Endothelial cell of umbilical vein (primary cell): ENCODE measurements at regions of chr10 and their contacts with region 1.

Region 1: DNA sequence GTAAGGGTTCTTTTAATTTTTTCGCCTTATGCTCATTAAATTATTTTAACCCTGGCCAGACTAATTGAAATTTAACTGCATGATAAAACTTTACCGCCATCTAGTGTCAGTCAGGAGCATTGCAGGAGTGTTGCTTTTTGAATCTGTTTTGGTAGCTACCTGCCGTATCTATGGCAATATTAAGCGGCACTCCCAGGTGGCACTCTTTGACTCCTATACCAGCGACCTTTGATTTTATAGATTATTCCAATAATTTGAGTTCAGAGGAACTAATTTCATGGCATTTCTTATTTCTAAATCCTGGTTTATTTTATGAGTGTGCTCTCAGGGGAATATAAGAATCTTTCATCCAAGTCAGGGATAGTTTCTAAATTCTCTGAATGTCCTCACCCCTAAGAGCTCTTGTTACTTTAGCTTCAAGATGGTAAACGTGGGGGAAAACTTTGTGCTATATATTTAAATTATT is 198.9 kb downstream of the REEP3 start:
- DNase-seq: peak; percentile 62
- H3K4me3 ChIP-seq: no peak overlapping the region
- H3K27ac ChIP-seq: no peak overlapping the region
- H3K4me1 ChIP-seq: peaks cover 20% of the 10 kb centered on the region
- H3K27me3 ChIP-seq: no peaks in the 10 kb centered on the region
- CTCF ChIP-seq: peak; percentile 76 to 81
- POLR2A ChIP-seq: no peak

Region 2: GRCh38 chr10:63206997-63207811 is 512.9 kb before region 1 on chr10:
- CTCF ChIA-PET with region 1: interaction called, 11 read pairs
- POLR2A ChIA-PET with region 1: no interaction called
- dilution Hi-C with region 1: loop called (anchors 25 kb)
- intact Hi-C with region 1: no loop called
- DNase-seq: peak; percentile 96
- H3K4me3 ChIP-seq: no peak overlapping the region
- H3K27ac ChIP-seq: peak overlapping the region; percentile 87
- H3K4me1 ChIP-seq: peaks cover 54% of the 10 kb centered on the region
- H3K27me3 ChIP-seq: no peaks in the 10 kb centered on the region
- CTCF ChIP-seq: no peak
- POLR2A ChIP-seq: no peak

Region 3: GRCh38 chr10:63268798-63269503 is 451.2 kb before region 1 on chr10:
- CTCF ChIA-PET with region 1: interaction called, 31 read pairs
- POLR2A ChIA-PET with region 1: interaction called, 4 read pairs
- dilution Hi-C with region 1: no loop called
- intact Hi-C with region 1: no loop called
- DNase-seq: peak; percentile 98
- H3K4me3 ChIP-seq: peak overlapping the region; percentile 75 to 99 (median 85)
- H3K27ac ChIP-seq: peak overlapping the region; percentile 92
- H3K4me1 ChIP-seq: peaks cover 31% of the 10 kb centered on the region
- H3K27me3 ChIP-seq: no peaks in the 10 kb centered on the region
- CTCF ChIP-seq: peak in 1 of 2 donors; percentile 23
- POLR2A ChIP-seq: peak; percentile 99

Region 4: GRCh38 chr10:63629363-63630084 is 90.6 kb before region 1 on chr10:
- CTCF ChIA-PET with region 1: interaction called, 266 read pairs
- POLR2A ChIA-PET with region 1: interaction called, 3 read pairs
- dilution Hi-C with region 1: no loop called
- intact Hi-C with region 1: loop called (anchors 1 kb)
- DNase-seq: peak; percentile 98
- H3K4me3 ChIP-seq: peak overlapping the region; percentile 18 to 58 (median 47)
- H3K27ac ChIP-seq: peak overlapping the region; percentile 98
- H3K4me1 ChIP-seq: peaks cover 34% of the 10 kb centered on the region
- H3K27me3 ChIP-seq: no peaks in the 10 kb centered on the region
- CTCF ChIP-seq: peak; percentile 86 to 92
- POLR2A ChIP-seq: peak; percentile 27

Region 5: GRCh38 chr10:63666836-63667383 is 53.2 kb before region 1 on chr10:
- CTCF ChIA-PET with region 1: interaction called, 32 read pairs
- POLR2A ChIA-PET with region 1: no interaction called
- dilution Hi-C with region 1: no loop called
- intact Hi-C with region 1: no loop called
- DNase-seq: peak; percentile 92
- H3K4me3 ChIP-seq: no peak overlapping the region
- H3K27ac ChIP-seq: peak overlapping the region; percentile 40
- H3K4me1 ChIP-seq: peaks cover 34% of the 10 kb centered on the region
- H3K27me3 ChIP-seq: no peaks in the 10 kb centered on the region
- CTCF ChIP-seq: no peak
- POLR2A ChIP-seq: no peak

Region 6: DNA sequence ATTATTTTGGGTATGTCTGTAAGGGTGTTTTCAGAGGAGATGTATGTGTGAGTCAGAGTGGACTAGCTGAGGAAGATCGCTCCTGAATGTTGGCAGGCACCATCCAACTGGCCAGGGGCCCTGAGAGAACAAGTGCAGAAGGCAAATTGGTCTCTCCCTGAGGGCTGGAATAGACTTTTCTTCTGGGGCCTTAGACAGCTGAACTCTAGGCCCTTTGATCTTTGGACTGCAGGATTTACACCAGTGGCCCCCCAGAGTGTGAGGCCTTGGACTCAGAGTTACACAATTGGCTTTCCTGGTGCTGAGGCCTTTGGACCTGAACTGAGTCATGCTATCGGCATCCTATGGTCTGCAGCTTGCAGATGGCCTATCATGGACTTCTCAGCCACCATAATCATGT is 18.3 kb after region 1 on chr10:
- CTCF ChIA-PET with region 1: interaction called, 12 read pairs
- POLR2A ChIA-PET with region 1: no interaction called
- dilution Hi-C with region 1: no loop called
- intact Hi-C with region 1: no loop called
- DNase-seq: no peak
- H3K4me3 ChIP-seq: no peak overlapping the region
- H3K27ac ChIP-seq: no peak overlapping the region
- H3K4me1 ChIP-seq: no peaks in the 10 kb centered on the region
- H3K27me3 ChIP-seq: peaks cover 0 to 4% of the 10 kb centered on the region in 2 experiments
- CTCF ChIP-seq: no peak
- POLR2A ChIP-seq: no peak

Region 7: GRCh38 chr10:63819753-63820329 is 99.7 kb after region 1 on chr10:
- CTCF ChIA-PET with region 1: interaction called, 39 read pairs
- POLR2A ChIA-PET with region 1: no interaction called
- dilution Hi-C with region 1: no loop called
- intact Hi-C with region 1: loop called (anchors 1 kb)
- DNase-seq: peak; percentile 78
- H3K4me3 ChIP-seq: no peak overlapping the region
- H3K27ac ChIP-seq: no peak overlapping the region
- H3K4me1 ChIP-seq: no peaks in the 10 kb centered on the region
- H3K27me3 ChIP-seq: peaks cover 11% of the 10 kb centered on the region in 2 experiments
- CTCF ChIP-seq: peak; percentile 74
- POLR2A ChIP-seq: no peak

Region 8: DNA sequence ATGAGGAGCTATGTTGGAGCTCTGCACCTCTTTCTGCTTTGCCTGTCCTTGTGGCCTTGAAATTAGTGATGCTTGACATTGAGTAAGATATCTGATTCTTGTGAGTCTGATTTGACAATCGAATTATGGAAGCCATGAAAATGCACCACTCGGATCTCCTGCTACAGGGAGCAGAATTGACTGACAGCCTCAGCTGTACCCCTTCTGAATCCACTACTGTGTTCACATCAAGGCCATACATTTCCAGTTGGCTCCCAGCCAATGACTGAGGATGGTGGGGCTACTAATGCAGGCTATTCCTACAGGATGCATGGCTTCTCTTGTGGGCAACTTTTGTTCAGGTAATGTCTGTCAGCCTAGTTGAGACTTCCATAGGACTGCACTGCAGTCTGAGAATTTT is 123.0 kb after region 1 on chr10:
- CTCF ChIA-PET with region 1: no interaction called
- POLR2A ChIA-PET with region 1: no interaction called
- dilution Hi-C with region 1: no loop called
- intact Hi-C with region 1: no loop called
- DNase-seq: no peak
- H3K4me3 ChIP-seq: no peak overlapping the region
- H3K27ac ChIP-seq: no peak overlapping the region
- H3K4me1 ChIP-seq: no peaks in the 10 kb centered on the region
- H3K27me3 ChIP-seq: peaks cover 0 to 4% of the 10 kb centered on the region in 2 experiments
- CTCF ChIP-seq: no peak
- POLR2A ChIP-seq: no peak